ENCODE measurements at regions of chr14 and their contacts with region 1.

Region 1: DNA sequence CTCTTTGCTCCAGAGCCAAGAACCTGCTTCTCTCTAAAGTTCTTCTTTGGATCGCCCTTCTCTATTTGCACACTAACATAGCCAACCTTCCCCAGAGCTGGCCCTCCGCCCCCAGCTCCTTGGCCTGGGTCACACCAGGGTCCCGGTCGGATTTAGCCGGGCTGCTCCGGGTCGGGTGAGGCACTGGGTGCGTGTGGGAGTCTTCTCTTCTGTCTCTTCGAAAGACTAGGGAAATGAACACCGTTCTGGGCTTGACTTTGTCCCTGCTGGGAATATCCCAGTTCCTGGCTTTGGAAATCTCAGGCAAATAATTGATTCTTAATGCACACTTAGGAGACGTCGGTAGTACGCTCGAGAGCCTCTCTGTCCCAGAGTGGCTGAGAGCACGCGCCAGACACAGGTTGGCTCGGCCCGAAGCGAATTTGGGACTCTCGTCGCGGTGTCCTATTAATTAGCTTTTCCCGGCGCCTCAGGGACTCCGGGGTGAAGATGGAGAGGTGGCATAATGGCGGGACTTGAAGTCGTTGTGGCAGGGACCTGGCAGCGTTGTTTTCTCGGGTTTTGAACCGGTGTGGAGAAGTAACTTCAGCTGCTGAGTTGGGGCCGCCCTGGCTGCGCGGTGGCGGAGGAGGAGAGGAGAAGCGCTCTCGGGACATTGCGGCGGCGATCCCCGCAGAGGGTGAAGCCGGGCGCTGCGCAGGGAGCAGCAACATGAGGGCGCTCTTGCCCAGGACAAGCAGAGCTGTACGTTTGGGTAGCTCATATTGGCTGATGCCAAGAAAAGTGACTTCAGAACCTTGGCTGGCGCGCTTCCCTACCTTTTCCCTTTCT is 7.5 kb downstream of the FOXG1 start:
- DNase-seq: peak; percentile 86
- ATAC-seq: peak; percentile 96
- H3K4me3 Mint-ChIP-seq: peak overlapping the region; percentile 67
- H3K27ac Mint-ChIP-seq: no peak overlapping the region
- H3K4me1 Mint-ChIP-seq: peaks cover 37% of the 10 kb centered on the region
- H3K27me3 Mint-ChIP-seq: peaks cover 100% of the 10 kb centered on the region
- CTCF ChIP-seq: peak; percentile 44

Region 2: DNA sequence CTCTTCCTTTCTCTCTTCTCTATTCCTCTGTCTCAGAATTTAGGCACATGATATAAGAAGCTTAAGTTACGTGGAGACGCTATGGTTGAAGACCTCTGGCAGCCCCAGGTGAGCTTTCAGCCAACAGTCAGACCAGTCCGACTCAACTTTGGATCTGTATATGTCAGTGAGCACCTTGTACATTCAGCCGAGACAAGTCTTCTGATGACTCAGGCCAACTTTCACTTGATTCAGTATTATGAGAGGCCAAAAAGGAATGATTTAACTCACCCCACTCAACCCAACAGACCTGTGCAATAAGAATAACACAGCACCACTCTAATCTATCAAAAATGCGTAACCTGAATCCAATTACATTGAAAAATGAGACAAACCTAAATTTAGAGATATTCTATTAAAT is 54.9 kb before region 1 on chr14:
- CTCF ChIA-PET with region 1: no interaction called
- POLR2A ChIA-PET with region 1: no interaction called
- DNase-seq: no peak
- ATAC-seq: no peak
- H3K4me3 Mint-ChIP-seq: no peak overlapping the region
- H3K27ac Mint-ChIP-seq: no peak overlapping the region
- H3K4me1 Mint-ChIP-seq: no peaks in the 10 kb centered on the region
- H3K27me3 Mint-ChIP-seq: no peaks in the 10 kb centered on the region
- CTCF ChIP-seq: no peak

Region 3: DNA sequence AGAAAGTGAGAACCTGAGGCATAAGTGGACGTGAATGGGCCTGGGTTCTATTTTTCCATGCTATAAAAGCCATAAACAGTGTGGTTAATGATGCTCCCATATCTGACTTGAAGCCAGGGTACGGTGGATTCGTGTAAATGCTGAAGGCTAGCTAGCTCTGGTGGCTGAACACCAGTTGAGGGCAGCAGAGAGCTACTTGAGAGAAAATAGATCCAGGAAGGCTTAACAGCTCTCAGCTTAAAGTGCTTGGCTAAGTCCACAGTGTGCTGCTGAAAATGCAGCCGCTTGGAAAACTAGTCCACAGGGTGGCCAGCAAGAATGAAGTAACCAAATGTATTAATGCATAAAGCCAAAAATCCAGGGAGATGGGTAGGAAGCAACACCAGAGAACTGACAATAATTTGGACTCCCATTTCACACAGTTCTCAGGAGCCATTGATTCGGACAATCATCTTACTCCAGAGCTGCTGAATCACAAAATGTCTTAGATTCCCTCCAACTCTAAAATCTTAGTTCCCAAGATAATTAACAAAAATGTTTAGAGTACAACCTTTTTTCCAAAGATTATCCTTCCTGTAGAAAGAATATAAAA is 22.5 kb before region 1 on chr14:
- CTCF ChIA-PET with region 1: interaction called, 31 read pairs
- POLR2A ChIA-PET with region 1: interaction called, 3 read pairs
- DNase-seq: peak; percentile 50
- ATAC-seq: peak; percentile 98
- H3K4me3 Mint-ChIP-seq: no peak overlapping the region
- H3K27ac Mint-ChIP-seq: no peak overlapping the region
- H3K4me1 Mint-ChIP-seq: peaks cover 18% of the 10 kb centered on the region
- H3K27me3 Mint-ChIP-seq: peaks cover 35% of the 10 kb centered on the region
- CTCF ChIP-seq: no peak; the same call in 1 of the 2 replicates

Region 4: GRCh38 chr14:28758885-28759652 is 15.0 kb before region 1 on chr14:
- CTCF ChIA-PET with region 1: interaction called, 41 read pairs
- POLR2A ChIA-PET with region 1: interaction called, 9 read pairs
- DNase-seq: peak; percentile 32
- ATAC-seq: peak; percentile 14; the same call in 1 of the 2 replicates
- H3K4me3 Mint-ChIP-seq: peak overlapping the region; percentile 61
- H3K27ac Mint-ChIP-seq: no peak overlapping the region
- H3K4me1 Mint-ChIP-seq: peaks cover 61% of the 10 kb centered on the region
- H3K27me3 Mint-ChIP-seq: peaks cover 100% of the 10 kb centered on the region
- CTCF ChIP-seq: no peak

Region 5: GRCh38 chr14:28987516-28987915 is 213.4 kb after region 1 on chr14:
- CTCF ChIA-PET with region 1: no interaction called
- POLR2A ChIA-PET with region 1: no interaction called
- DNase-seq: no peak
- ATAC-seq: no peak
- H3K4me3 Mint-ChIP-seq: no peak overlapping the region
- H3K27ac Mint-ChIP-seq: no peak overlapping the region
- H3K4me1 Mint-ChIP-seq: no peaks in the 10 kb centered on the region
- H3K27me3 Mint-ChIP-seq: no peaks in the 10 kb centered on the region
- CTCF ChIP-seq: no peak

Region 6: DNA sequence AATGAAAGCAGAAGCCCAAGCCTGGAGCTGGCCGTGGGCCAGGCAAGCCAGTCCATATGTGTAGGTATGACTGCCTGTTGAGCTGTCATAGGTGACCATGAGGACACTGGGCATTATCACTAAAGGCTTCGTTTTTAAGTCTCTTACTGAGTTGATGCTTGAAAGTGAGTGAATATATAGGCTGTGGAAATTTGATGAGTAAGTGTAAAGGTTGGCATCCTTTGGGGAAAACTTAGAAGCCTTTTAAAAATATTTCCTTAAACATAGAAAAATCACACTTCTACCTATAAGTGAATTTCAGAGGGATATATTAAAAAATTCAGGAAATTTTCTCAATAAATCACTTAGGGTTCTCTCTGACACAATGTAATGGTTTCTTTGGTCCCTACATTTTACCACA is 389.0 kb after region 1 on chr14:
- CTCF ChIA-PET with region 1: interaction called, 10 read pairs
- POLR2A ChIA-PET with region 1: no interaction called
- DNase-seq: no peak
- ATAC-seq: no peak
- H3K4me3 Mint-ChIP-seq: no peak overlapping the region
- H3K27ac Mint-ChIP-seq: no peak overlapping the region
- H3K4me1 Mint-ChIP-seq: no peaks in the 10 kb centered on the region
- H3K27me3 Mint-ChIP-seq: no peaks in the 10 kb centered on the region
- CTCF ChIP-seq: no peak

Region 7: DNA sequence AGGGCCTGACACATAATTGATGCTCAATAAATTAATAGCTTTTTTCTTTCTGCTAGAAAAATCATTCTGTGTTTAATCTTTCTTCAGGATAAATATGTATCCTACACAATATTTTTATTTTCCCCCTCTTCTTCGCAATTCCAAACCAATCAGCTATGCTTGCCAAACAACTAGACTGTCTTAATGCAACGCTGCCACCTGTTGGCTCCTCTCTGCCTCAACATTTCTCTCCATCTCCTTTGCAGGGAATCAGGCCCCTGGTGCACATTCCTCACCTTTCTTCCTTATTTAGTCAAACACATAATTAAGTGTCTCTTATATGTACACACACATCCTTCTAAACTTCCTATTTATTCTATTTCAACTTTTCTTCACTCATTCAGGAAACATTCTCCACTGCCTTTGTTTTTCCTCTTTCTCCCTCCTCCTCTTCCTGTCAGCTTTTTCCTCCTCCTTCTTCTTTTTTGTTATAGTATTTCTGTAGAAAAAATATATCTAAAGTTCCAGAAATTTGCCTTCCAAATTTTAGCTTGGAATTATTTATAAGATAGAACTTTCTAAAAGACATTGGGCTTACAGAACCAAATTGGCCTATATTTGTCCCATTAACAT is 747.6 kb after region 1 on chr14:
- CTCF ChIA-PET with region 1: interaction called, 21 read pairs
- POLR2A ChIA-PET with region 1: no interaction called
- DNase-seq: peak; percentile 51
- ATAC-seq: peak; percentile 81
- H3K4me3 Mint-ChIP-seq: no peak overlapping the region
- H3K27ac Mint-ChIP-seq: no peak overlapping the region
- H3K4me1 Mint-ChIP-seq: no peaks in the 10 kb centered on the region
- H3K27me3 Mint-ChIP-seq: no peaks in the 10 kb centered on the region; the same call in 1 of the 2 replicates
- CTCF ChIP-seq: peak; percentile 36; the same call in 1 of the 2 replicates

Measured in WTC11 (cell line).